CD4-positive, alpha-beta memory T cell (primary cell): ENCODE measurements at regions of chr2 and their contacts with region 1.

Region 1: DNA sequence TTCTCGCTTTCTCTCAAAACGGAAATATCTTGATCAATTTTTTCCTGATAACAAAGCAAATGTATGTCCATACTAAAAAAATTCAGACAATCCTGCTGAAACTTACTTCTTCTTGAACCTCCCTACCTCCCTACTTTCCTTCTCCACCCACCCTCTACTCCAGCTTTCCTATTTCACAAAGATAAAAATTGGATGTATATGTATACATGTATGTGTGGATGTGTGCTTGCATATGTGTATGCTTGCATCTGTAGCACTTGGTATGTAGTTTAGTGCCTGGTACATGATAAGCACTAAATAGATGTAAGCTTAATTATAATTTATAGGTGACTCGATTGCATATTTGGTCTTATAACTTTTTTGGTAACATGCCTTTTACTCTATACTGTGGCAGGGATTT is 167.5 kb upstream of the ITGA4 start:
- DNase-seq: no peak
- H3K4me3 ChIP-seq: no peak overlapping the region
- H3K4me3 Mint-ChIP-seq: no peak overlapping the region
- H3K27ac ChIP-seq: no peak overlapping the region
- H3K27ac Mint-ChIP-seq: no peak overlapping the region
- H3K4me1 ChIP-seq: no peaks in the 10 kb centered on the region
- H3K4me1 Mint-ChIP-seq: peaks cover 0 to 10% (median 5%) of the 10 kb centered on the region in 4 donors
- H3K27me3 ChIP-seq: no peaks in the 10 kb centered on the region
- H3K27me3 Mint-ChIP-seq: no peaks in the 10 kb centered on the region

Region 2: DNA sequence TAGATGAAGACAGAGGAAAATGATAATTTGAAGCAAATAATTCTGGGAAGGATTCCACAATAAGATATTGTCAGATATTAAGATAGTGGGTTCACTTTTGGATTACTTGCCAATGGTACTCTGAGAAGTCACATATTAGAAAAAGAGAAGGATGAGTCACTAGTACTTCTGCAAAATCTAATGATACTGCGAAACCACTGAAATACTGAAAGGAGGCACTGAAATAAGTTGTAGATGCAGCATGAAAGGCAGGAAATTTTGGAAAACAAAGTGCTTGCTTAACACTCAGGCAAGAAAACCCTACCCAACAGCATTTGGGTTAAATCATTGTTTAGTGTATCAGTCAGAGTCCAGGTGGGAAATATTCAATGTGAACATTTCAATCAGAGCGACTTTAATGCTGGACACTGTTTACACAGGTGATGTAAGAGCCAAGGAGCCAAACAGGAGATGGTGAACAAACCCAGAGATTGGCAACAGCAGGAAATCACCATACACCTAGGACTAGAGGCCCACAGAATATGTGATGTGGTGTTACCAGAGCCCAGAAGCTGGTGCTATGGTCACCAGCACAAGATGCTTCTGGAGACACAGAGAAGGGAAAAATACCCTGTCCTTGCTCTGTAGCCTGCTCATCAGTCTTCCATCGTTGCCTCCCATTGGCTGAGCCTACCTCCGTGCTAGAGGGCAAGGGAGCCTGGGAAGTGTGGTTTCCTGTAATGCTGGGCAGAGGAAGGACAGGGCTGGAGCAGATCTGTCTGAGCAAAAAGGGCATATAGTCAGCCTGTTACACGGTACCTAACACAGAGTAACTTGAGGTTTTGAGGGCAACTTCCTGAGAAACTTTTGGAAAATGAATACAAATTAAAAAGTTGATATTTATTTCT is 37.2 kb before region 1 on chr2:
- CTCF ChIA-PET with region 1: no interaction called
- POLR2A ChIA-PET with region 1: no interaction called
- intact Hi-C with region 1: loop called (anchors 5 kb)
- DNase-seq: no peak
- H3K4me3 ChIP-seq: no peak overlapping the region
- H3K4me3 Mint-ChIP-seq: peak overlapping the region in 1 of 8 donors; percentile 29
- H3K27ac ChIP-seq: no peak overlapping the region
- H3K27ac Mint-ChIP-seq: peak overlapping the region in 2 of 7 donors; percentile 3 to 52
- H3K4me1 ChIP-seq: peaks cover 7% of the 10 kb centered on the region
- H3K4me1 Mint-ChIP-seq: peaks cover 10 to 16% (median 13%) of the 10 kb centered on the region in 4 donors
- H3K27me3 ChIP-seq: no peaks in the 10 kb centered on the region
- H3K27me3 Mint-ChIP-seq: no peaks in the 10 kb centered on the region